Activated CD4-positive, alpha-beta T cell treated with anti-CD3 and anti-CD28 coated beads for 36 hours (primary cell): ENCODE measurements at regions of chr4 and their contacts with region 1.

Region 1: DNA sequence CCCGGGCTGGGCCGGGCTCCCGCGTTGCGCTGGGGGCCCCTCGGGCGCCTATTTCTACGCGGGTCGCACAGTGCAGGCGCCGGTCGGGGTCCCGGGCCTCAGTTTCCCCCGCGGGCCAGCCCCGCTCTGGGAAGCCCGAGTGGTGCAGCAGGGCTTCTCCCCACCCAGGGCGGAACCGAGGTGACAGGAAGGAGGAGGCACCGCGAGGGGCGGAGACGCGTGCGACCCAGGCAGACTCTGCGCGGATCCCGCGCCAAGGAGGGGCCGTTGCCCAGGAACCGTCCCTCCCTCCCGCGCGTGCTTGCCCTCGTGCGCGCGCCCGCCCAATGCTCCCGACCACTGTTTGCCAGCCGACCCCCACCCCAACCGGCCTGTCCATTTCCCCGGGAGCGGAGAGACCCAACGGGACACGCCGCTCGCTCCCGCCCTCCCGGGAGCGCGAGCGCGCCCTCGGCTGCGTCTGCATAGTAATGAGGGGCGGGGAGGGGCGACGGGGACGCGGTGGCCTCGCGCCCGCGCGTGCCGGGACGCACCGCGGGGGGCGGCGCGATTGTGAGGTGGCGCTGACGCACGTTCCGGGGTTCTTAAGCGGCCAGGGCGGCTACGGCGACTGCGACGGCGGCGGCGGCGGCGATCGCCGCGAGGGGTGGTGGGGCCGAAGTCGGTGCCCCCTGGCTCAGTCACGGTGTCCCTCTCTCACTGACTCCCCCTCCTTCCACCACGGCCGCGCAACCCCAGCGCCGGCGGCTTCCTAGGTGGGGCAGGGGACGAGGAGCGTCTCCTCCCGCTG is at the start of gene CPEB2:
- DNase-seq: peak; percentile 95
- ATAC-seq: peak; percentile 72
- H3K4me3 Mint-ChIP-seq: peak within 1 kb of the TSS; percentile 87
- H3K27ac Mint-ChIP-seq: peak within 1 kb of the TSS; percentile 96
- H3K4me1 Mint-ChIP-seq: peaks cover 14% of the 10 kb centered on the region
- H3K27me3 Mint-ChIP-seq: no peaks in the 10 kb centered on the region
- total RNA-seq, gene CPEB2: 6.7 TPM

Region 2: DNA sequence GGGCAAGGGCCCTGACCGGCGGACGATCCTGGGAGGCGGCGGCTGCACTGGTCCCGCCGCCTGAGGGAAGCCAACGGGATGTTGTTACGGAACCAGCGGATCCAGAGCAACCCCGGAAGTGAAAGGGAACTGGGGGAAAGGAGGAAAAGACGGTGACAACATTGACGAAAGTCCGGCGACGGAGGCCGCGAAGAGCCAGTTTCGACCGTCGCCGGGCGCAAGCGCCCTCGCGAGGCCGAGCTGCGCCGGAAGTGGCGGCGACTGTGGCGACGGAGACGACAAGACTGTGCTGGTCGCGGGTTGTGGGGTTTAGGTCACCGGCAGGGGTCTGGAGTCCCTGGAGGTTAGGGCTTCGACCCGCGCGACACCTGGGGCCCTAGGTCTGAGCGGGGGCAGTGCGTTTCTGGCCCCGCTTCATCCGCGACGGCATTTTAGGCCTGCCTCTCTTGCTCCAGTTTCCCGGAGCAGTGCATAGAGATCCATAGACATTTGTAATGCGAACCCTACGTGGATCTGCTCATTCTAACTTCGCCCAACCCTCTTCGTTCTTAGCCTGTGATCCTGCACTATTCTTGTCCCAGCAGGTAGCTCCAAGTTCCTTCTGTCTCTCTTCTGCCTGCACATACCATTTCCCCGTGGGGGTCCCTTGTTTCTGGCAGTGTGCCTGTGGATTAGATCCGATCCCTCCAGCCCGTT is 1374.3 kb before region 1 on chr4 and contains the start of gene BOD1L1:
- CTCF ChIA-PET with region 1: no interaction called
- POLR2A ChIA-PET with region 1: no interaction called
- intact Hi-C with region 1: loop called (anchors 1 kb)
- DNase-seq: peak; percentile 89
- ATAC-seq: peak; percentile 79
- H3K4me3 Mint-ChIP-seq: peak within 1 kb of the TSS; percentile 80
- H3K27ac Mint-ChIP-seq: peak within 1 kb of the TSS; percentile 91
- H3K4me1 Mint-ChIP-seq: peaks cover 43% of the 10 kb centered on the region
- H3K27me3 Mint-ChIP-seq: no peaks in the 10 kb centered on the region
- total RNA-seq, gene BOD1L1: 32.4 to 42.7 TPM

Region 3: GRCh38 chr4:14787894-14788293 is 214.2 kb before region 1 on chr4:
- CTCF ChIA-PET with region 1: no interaction called
- POLR2A ChIA-PET with region 1: no interaction called
- intact Hi-C with region 1: loop called (anchors 2 kb)
- DNase-seq: peak; percentile 42
- ATAC-seq: peak; percentile 27
- H3K4me3 Mint-ChIP-seq: no peak overlapping the region
- H3K27ac Mint-ChIP-seq: no peak overlapping the region
- H3K4me1 Mint-ChIP-seq: peaks cover 35% of the 10 kb centered on the region
- H3K27me3 Mint-ChIP-seq: peaks cover 18% of the 10 kb centered on the region

Region 4: DNA sequence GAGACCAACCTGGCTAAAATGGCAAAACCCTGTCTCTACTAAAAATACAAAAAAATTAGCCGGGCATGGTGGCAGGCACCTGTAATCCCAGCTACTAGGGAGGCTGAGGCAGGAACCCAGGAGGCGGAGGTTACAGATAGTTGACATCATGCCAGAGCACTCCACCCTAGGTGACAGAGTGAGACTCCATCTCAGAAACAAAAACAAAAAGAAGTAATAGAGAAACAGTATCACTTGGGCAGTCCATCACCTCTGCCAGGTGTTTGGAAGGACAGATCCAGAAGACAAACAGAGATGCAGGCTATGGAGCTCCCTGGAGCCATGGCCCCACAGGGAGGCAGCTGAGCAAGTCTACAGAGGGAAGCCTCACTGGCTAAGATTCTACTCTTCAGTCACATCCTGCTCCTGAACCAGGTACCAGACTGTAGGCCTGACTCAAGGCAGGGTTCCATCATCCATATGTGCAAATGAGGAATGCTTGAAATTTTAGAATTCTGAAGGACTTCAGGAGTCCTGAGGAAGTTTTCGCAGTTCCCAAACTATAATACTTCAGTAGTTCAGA is 81.2 kb before region 1 on chr4:
- CTCF ChIA-PET with region 1: interaction called, 3 read pairs
- POLR2A ChIA-PET with region 1: no interaction called
- intact Hi-C with region 1: loop called in 1 of 2 experiments (anchors 2 kb)
- DNase-seq: peak; percentile 55
- ATAC-seq: peak; percentile 76
- H3K4me3 Mint-ChIP-seq: no peak overlapping the region
- H3K27ac Mint-ChIP-seq: no peak overlapping the region
- H3K4me1 Mint-ChIP-seq: no peaks in the 10 kb centered on the region
- H3K27me3 Mint-ChIP-seq: peaks cover 6% of the 10 kb centered on the region

Region 5: GRCh38 chr4:15231265-15232091 is 229.4 kb after region 1 on chr4:
- CTCF ChIA-PET with region 1: no interaction called
- POLR2A ChIA-PET with region 1: no interaction called
- intact Hi-C with region 1: loop called in 1 of 2 experiments (anchors 5 kb)
- DNase-seq: peak; percentile 85
- ATAC-seq: peak; percentile 65
- H3K4me3 Mint-ChIP-seq: no peak overlapping the region
- H3K27ac Mint-ChIP-seq: no peak overlapping the region
- H3K4me1 Mint-ChIP-seq: peaks cover 31% of the 10 kb centered on the region
- H3K27me3 Mint-ChIP-seq: no peaks in the 10 kb centered on the region

Region 6: GRCh38 chr4:15681207-15682015 is 679.3 kb after region 1 on chr4 and contains the start of gene FAM200B:
- CTCF ChIA-PET with region 1: no interaction called
- POLR2A ChIA-PET with region 1: no interaction called
- intact Hi-C with region 1: loop called in 1 of 2 experiments (anchors 1 kb)
- DNase-seq: peak; percentile 99
- ATAC-seq: peak; percentile 98
- H3K4me3 Mint-ChIP-seq: peak within 1 kb of the TSS; percentile 98
- H3K27ac Mint-ChIP-seq: peak within 1 kb of the TSS; percentile 96
- H3K4me1 Mint-ChIP-seq: peaks cover 39% of the 10 kb centered on the region
- H3K27me3 Mint-ChIP-seq: no peaks in the 10 kb centered on the region
- total RNA-seq, gene FAM200B: 9.8 to 13.3 TPM